ENCODE measurements at regions of chr19 and their contacts with region 1.

Region 1: DNA sequence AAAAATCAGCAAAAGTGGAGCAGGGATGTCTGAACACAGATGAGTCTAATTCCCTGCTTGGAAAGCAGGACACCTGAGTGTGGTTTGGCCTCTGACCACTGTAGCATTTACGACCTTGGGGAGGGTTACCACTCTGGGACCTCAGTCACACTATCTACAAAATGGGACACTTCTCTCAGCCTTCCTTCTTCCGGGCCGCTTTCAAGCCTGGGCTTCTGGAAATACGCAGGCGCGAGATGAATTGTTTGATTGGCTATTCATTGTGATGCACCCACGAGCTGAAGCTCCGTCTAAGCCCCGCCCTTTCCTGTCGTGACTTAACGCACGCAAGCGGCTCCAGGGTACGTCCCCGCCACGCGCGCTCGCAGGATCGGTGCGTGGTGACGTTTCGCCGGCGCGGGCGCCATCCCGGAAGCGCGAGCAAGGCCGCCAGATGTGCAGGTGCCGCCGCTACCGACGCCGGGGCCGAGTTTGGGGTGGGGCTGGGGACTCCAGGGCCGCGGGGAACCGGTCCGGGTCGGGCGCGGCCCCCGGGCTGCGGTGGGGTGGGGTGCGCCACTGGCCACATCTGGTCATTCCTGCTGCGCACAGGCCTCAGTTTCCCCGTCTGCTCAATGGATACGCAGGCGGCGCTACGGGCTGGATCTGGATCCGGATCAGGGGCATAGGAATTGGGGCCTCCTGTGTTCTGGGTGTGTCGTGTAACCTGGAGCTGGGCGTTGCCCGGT is at the start of gene KXD1:
- DNase-seq: peak; percentile 87 to 100 (median 95)
- ATAC-seq: peak; percentile 98
- H3K4me3 ChIP-seq: peak within 1 kb of the TSS; percentile 77
- H3K27ac ChIP-seq: peak within 1 kb of the TSS; percentile 81
- H3K4me1 ChIP-seq: peaks cover 8 to 23% of the 10 kb centered on the region in 2 experiments; a peak in 4 of 5 replicates
- H3K27me3 ChIP-seq: no peaks in the 10 kb centered on the region
- CTCF ChIP-seq: no peak
- EP300 ChIP-seq: no peak
- POLR2A ChIP-seq: peak; percentile 80
- RAD21 ChIP-seq: no peak
- polyA plus RNA-seq, gene KXD1: 21.9 to 41.3 TPM

Region 2: GRCh38 chr19:18428787-18429674 is 128.6 kb before region 1 on chr19:
- CTCF ChIA-PET with region 1: no interaction called
- POLR2A ChIA-PET with region 1: no interaction called
- in situ Hi-C with region 1: no loop called
- intact Hi-C with region 1: no loop called
- DNase-seq: peak; percentile 84 to 94 (median 88)
- ATAC-seq: peak; percentile 88
- H3K4me3 ChIP-seq: peak overlapping the region; percentile 41
- H3K27ac ChIP-seq: peak overlapping the region; percentile 85
- H3K4me1 ChIP-seq: peaks cover 39 to 99% of the 10 kb centered on the region in 2 experiments
- H3K27me3 ChIP-seq: no peaks in the 10 kb centered on the region
- CTCF ChIP-seq: 0 out of 6 replicates have a peak, but pooled peaks of 1 of the 3 experiments have one; percentile 0
- EP300 ChIP-seq: 0 out of 2 replicates have a peak, but pooled peaks have one; percentile 1
- POLR2A ChIP-seq: 0 out of 2 replicates have a peak, but pooled peaks have one; percentile 0
- RAD21 ChIP-seq: no peak

Region 3: GRCh38 chr19:18542936-18543815 is 14.5 kb before region 1 on chr19 and contains the start of gene FKBP8:
- CTCF ChIA-PET with region 1: no interaction called
- POLR2A ChIA-PET with region 1: interaction called, 12 read pairs
- in situ Hi-C with region 1: no loop called
- intact Hi-C with region 1: loop called (anchors 1 kb)
- DNase-seq: peak; percentile 94 to 97 (median 96)
- ATAC-seq: peak; percentile 97
- H3K4me3 ChIP-seq: peak within 1 kb of the TSS; percentile 68
- H3K27ac ChIP-seq: peak within 1 kb of the TSS; percentile 88
- H3K4me1 ChIP-seq: peaks cover 18 to 38% of the 10 kb centered on the region in 2 experiments
- H3K27me3 ChIP-seq: no peaks in the 10 kb centered on the region
- CTCF ChIP-seq: no peak
- EP300 ChIP-seq: no peak
- POLR2A ChIP-seq: no peak
- RAD21 ChIP-seq: no peak
- polyA plus RNA-seq, gene FKBP8: 0.46 to 1.0 TPM

Region 4: GRCh38 chr19:18809150-18809868 is 251.7 kb after region 1 on chr19:
- CTCF ChIA-PET with region 1: no interaction called
- POLR2A ChIA-PET with region 1: no interaction called
- in situ Hi-C with region 1: no loop called
- intact Hi-C with region 1: no loop called
- DNase-seq: no peak
- ATAC-seq: peak; percentile 31; the same call in 1 of the 3 replicates
- H3K4me3 ChIP-seq: no peak overlapping the region
- H3K27ac ChIP-seq: no peak overlapping the region
- H3K4me1 ChIP-seq: peaks cover 0 to 4% of the 10 kb centered on the region in 2 experiments; a peak in 2 of 5 replicates
- H3K27me3 ChIP-seq: peaks cover 36 to 54% of the 10 kb centered on the region in 2 experiments
- CTCF ChIP-seq: no peak
- EP300 ChIP-seq: no peak
- POLR2A ChIP-seq: no peak
- RAD21 ChIP-seq: no peak